PC-3 (cell line): ENCODE measurements at regions of chr3 and their contacts with region 1.

Region 1: GRCh38 chr3:156723182-156723619 is 48.8 kb downstream of the TIPARP start:
- DNase-seq: no peak
- ATAC-seq: no peak
- H3K4me3 ChIP-seq: no peak overlapping the region
- H3K27ac ChIP-seq: no peak overlapping the region
- H3K4me1 ChIP-seq: peaks cover 15% of the 10 kb centered on the region
- H3K27me3 ChIP-seq: no peaks in the 10 kb centered on the region
- CTCF ChIP-seq: no peak

Region 2: DNA sequence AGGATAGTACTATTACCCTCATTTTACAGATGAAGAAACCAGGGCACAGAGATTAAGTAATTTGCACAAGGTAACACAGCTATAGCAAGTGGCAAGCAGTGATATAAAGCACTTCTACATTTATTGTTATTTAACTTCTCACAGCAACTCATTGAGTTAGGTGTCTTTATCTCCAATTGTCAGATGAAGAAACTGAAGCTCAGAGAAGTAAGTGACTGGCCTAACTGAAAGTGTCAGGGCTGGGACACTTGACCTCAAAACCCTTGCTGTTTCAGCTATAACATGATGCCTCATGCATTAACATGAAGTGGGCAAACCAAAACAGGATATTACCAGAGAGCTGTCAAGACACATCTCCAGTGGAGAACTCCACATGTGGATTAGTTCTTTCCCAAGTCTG is 37.1 kb after region 1 on chr3:
- CTCF ChIA-PET with region 1: no interaction called
- POLR2A ChIA-PET with region 1: no interaction called
- intact Hi-C with region 1: loop called (anchors 5 kb)
- DNase-seq: no peak
- ATAC-seq: no peak
- H3K4me3 ChIP-seq: no peak overlapping the region
- H3K27ac ChIP-seq: no peak overlapping the region
- H3K4me1 ChIP-seq: 0 out of 2 replicates have a peak, but pooled peaks cover 5% of the 10 kb centered on the region
- H3K27me3 ChIP-seq: no peaks in the 10 kb centered on the region
- CTCF ChIP-seq: no peak